MCF 10A (cell line): ENCODE measurements at regions of chr6 and their contacts with region 1.

Region 1: GRCh38 chr6:44399991-44400390 is 12.5 kb downstream of the CDC5L start:
- DNase-seq: no peak
- H3K4me3 Mint-ChIP-seq: no peak overlapping the region
- H3K27ac Mint-ChIP-seq: no peak overlapping the region
- H3K4me1 Mint-ChIP-seq: no peaks in the 10 kb centered on the region
- H3K27me3 Mint-ChIP-seq: no peaks in the 10 kb centered on the region
- CTCF ChIP-seq: no peak

Region 2: GRCh38 chr6:44422531-44422930 is 22.5 kb after region 1 on chr6:
- CTCF ChIA-PET with region 1: no interaction called
- POLR2A ChIA-PET with region 1: no interaction called
- intact Hi-C with region 1: loop called (anchors 1 kb)
- DNase-seq: no peak
- H3K4me3 Mint-ChIP-seq: no peak overlapping the region
- H3K27ac Mint-ChIP-seq: no peak overlapping the region
- H3K4me1 Mint-ChIP-seq: no peaks in the 10 kb centered on the region
- H3K27me3 Mint-ChIP-seq: no peaks in the 10 kb centered on the region
- CTCF ChIP-seq: no peak